ENCODE measurements at regions of chr5 and their contacts with region 1.

Region 1: DNA sequence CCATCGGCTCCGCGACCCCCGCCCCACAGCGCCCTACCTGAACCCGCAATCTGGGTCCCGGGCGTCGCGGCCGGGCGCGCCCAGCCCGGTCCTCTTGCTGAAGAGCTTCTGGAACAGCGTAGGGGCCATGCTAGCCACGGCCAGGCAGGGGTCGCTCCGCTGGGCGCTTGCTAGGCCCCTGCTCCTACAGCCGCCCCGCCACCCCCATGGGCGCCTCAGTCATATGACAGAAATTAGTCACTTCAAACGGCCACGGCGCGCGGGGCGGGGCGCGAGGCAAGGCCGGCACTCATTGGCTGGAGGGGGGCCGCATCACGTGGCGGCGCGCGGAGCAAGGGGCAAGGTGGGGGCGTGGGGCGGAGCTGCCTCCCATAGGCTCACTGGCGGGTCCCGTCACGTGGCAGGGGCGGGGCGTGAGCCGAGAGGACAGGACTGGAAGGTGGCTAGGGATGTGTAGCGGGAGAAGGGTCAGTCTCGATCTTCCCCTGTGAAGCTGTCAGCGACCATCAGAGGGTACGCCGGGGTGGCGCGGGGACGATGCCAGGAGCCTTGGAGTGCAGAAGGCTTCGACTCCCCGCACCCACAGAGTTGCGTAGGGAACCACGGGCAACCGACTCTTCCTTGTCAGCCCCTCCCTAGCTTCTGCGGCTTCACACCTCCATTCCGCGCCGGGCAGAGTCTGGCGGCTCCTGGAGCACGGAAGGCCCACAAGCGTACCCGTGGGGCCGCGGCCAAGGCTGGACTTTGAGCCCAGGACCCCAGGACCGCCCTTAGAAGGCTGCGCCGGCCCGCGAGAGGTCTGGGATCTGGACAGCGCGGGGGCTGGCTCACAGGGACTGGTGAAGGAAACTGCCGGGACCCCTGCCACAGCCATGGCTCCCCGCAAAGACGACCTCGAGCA is at the start of gene FNIP1:
- DNase-seq: peak; percentile 100
- ATAC-seq: peak; percentile 99
- total RNA-seq, gene FNIP1: 30.8 TPM

Region 2: DNA sequence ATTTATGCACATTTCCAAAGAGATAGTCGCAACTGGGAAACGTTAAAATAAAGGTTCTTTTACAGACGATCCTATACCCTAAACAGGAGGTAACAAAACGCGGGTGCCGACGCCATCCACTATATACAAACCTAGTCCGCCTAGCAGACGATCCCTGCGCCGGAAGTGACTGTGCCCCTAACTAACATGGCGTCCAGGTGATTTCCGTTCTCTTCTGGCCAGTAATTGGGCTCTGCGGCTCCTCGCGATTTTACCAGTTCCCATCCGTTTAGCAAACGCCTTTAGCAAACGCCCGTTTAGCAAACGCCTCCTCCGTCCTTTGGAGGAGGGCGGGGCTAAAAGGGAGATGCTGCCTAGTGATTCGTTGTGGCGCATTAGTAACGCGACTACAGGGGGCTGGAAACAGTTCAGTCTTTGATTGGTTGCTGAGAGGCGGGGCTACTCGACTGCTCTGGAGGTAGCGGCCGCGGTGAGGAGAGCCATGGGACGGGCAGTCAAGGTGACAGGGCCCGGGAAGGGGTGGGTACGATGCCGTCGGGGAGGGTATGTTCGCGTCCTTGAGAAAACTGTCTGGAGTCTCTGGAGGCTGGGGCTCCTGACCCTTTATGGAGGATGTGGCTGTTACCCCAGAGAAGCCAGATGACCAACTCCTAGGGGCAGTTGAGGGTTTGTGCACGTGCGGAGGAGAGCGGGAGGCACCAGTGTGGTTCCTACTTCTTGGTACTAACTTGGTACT is 626.3 kb before region 1 on chr5 and contains the start of gene LYRM7:
- intact Hi-C with region 1: loop called (anchors 5 kb)
- DNase-seq: peak; percentile 96
- ATAC-seq: peak; percentile 99
- total RNA-seq, gene LYRM7: 26.9 TPM

Region 3: DNA sequence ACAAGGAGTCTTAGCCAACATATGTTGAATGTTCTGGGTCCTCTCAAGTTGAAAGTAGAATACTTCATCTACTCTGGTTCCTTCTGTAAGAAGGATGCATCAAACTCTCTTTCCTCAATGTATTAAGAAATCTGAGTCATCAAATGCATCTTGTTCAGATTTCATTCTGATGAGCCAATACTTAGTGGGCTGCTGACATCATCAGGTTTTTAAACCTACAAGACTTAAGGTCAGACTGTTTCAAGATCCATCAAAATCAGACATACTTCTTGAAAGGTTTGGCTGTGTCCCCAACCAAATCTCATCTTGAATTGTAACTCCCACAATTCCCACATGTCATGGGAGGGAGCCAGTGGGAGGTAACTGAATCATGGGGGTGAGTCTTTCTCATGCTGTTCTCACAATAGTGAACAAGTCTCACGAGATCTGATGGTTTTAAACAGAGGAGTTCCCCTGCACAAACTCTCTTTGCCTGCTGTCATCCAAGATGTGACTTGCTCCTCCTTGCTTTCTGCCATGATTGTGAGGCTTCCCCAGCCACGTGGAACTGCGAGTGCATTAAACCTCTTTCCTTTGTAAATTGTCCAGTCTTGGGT is 330.8 kb before region 1 on chr5:
- intact Hi-C with region 1: no loop called
- DNase-seq: no peak
- ATAC-seq: no peak

Region 4: GRCh38 chr5:131634996-131635754 is 161.9 kb before region 1 on chr5 and contains the start of gene RAPGEF6:
- intact Hi-C with region 1: loop called (anchors 2 kb)
- DNase-seq: peak; percentile 98
- ATAC-seq: peak; percentile 97
- total RNA-seq, gene RAPGEF6: 8.5 TPM

Region 5: DNA sequence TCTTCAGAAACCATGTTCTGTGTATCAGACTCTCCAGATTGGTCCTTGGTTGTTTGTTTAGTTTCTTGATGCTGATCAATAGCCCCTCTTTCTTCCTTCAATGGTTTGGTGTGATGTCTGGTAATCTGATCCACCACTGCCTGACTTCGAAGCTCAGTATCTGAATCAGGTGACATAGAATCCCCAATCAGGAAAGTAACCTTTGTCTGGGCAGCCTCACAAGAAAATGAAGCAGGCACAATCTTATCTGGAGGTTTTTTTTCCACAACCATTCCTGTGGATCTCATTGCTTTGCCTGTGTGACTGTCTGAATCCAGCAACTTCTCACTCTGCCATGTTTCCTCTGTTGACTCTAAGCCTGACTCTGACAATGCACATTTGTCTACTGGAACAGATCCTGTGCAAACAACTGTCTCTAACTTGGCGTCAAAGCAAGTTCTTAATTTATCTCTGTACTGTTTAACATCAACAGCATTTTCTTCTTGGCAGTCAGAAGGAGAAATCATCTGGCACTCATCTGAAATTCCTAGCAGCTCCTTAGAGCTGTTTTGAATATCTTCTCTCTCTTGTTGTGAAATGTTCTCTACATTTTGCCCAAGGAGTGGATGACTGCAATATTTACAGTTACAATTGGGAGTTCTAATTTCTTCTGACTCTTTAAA is 124.9 kb before region 1 on chr5:
- intact Hi-C with region 1: loop called (anchors 2 kb)
- DNase-seq: no peak
- ATAC-seq: peak; percentile 94

Region 6: GRCh38 chr5:131710391-131710790 is 86.7 kb before region 1 on chr5:
- intact Hi-C with region 1: loop called (anchors 5 kb)
- DNase-seq: no peak
- ATAC-seq: no peak

Region 7: GRCh38 chr5:131758520-131758900 is 38.5 kb before region 1 on chr5:
- intact Hi-C with region 1: loop called (anchors 5 kb)
- DNase-seq: no peak
- ATAC-seq: peak; percentile 81

Region 8: GRCh38 chr5:131825404-131826013 is 28.5 kb after region 1 on chr5:
- intact Hi-C with region 1: no loop called
- DNase-seq: no peak
- ATAC-seq: no peak

Region 9: DNA sequence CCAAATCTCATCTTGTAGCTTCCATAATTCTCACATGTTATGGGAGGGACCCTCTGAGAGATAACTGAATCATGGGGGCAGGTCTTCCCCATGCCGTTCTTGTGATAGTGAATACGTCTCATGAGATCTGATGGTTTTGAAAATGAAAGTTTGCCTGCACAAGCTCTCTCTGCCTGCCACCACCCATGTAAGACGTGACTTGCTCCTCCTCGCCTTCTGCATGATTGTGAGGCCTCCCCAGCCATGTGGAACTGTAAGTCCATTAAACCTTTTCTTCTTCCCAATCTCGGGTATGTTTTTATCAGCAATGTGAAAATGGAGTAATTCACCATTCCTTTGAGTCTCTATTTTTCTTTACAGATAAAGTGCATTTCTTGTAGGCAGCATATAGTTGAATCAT is 66.7 kb after region 1 on chr5:
- intact Hi-C with region 1: no loop called
- DNase-seq: no peak
- ATAC-seq: no peak

Region 10: DNA sequence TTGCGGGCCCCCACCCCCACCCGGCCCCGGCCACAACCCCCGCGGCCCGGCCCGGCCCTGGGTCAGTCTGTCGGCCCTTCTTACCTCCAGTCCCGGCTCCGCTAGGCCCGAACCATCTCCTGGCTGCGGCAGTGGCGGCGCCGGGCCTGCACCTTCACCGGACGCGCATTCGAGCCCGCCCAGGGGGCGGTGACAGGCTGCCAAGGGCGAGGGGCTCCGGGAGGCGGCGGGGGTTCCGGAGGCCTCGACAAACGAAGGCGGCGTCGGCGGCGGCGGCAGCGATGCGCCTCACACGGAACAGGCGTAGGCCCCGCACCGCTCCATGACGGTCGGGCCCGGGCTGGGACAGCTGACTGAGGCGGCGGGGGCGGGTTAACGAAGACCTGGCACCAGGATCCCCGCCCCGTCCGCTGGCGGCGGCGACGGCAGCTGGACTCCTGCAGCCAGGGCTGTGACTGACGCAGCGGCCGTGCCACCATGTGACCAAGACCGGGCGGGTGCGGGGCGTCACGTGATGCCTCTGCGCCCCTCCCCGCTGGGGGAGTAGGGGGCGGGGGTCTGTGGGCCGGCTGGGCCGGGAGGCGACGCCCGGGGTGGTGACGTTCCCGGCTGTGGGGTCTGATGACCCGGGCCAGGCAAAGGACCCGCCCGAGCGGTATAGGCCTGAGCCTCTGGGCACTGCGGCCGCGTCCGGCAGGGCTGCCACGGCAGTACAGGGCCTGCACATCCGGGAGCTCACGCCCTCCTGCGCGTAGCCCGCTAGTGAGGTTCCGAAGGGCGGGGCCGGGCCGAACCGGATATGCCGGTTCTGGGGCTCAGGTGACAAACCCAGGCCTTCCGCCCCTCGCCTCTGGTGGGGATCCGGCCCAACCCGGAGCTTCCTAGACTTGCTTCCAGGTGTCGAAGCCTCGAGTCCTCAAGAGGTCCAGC is 1166.4 kb after region 1 on chr5 and contains the start of gene AFF4:
- intact Hi-C with region 1: loop called (anchors 10 kb)
- DNase-seq: peak; percentile 99
- ATAC-seq: peak; percentile 98
- total RNA-seq, gene AFF4: 29.2 TPM